Activated CD8-positive, alpha-beta memory T cell treated with anti-CD3 and anti-CD28 coated beads, Interleukin-2, amount 10 ng/mL, durations not matched to agents 7 days and 5 days (primary cell): ENCODE measurements at regions of chr6 and their contacts with region 1.

Region 1: DNA sequence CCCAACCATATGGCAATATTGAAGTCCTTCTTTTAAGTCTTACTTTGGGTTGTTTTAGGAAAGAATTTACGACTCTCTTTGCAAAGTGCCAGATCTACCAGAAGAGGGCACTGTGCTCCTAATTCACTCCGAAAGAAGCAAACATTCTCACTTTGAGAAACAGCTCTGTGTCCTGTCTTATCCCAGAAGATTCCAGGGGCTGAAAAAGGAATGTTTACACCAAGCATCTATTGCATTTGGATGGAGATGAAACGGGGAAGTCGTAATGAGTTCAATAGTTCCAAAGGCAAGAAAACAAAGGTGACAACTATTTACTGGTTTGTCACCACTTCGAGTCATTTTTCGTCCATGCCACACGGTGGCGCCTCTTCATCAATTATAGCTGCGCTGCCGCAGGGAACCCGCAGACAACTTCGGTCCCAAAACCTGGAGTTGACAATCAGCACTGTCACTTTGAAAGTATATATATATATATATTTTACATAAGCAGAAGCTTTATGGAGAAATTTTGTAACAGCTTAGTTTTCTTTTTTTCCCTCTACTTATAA is 121.6 kb downstream of the MOXD1 start:
- DNase-seq: peak; percentile 76
- ATAC-seq: peak; percentile 91
- H3K4me3 Mint-ChIP-seq: peak overlapping the region; percentile 66
- H3K27ac Mint-ChIP-seq: no peak overlapping the region
- H3K4me1 Mint-ChIP-seq: peaks cover 2% of the 10 kb centered on the region
- H3K27me3 Mint-ChIP-seq: peaks cover 21% of the 10 kb centered on the region

Region 2: GRCh38 chr6:132289756-132290155 is 10.1 kb after region 1 on chr6:
- CTCF ChIA-PET with region 1: interaction called, 51 read pairs
- DNase-seq: no peak
- ATAC-seq: no peak
- H3K4me3 Mint-ChIP-seq: no peak overlapping the region
- H3K27ac Mint-ChIP-seq: no peak overlapping the region
- H3K4me1 Mint-ChIP-seq: no peaks in the 10 kb centered on the region
- H3K27me3 Mint-ChIP-seq: peaks cover 37% of the 10 kb centered on the region

Region 3: GRCh38 chr6:132471788-132472187 is 192.1 kb after region 1 on chr6:
- CTCF ChIA-PET with region 1: interaction called, 17 read pairs
- DNase-seq: no peak
- ATAC-seq: no peak
- H3K4me3 Mint-ChIP-seq: no peak overlapping the region
- H3K27ac Mint-ChIP-seq: no peak overlapping the region
- H3K4me1 Mint-ChIP-seq: no peaks in the 10 kb centered on the region
- H3K27me3 Mint-ChIP-seq: no peaks in the 10 kb centered on the region

Region 4: DNA sequence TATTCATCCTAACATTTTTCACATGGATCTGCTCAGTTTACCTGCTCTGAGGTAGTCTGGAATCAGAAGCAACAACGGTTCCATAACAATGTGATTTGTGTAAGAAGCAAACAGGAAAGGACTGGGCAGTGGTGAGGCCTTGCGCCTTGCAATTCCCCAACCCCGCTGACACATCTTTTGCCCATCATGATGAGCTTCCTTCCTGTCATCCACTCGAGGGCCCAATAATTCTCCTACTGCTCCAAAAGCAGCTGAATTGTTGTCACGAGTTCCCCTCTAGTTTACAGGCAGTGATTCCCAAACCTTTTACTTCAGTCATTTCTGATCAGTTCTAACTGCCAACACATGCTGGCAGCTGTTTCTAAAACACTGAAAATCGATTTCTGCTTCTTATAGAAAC is 210.4 kb after region 1 on chr6:
- CTCF ChIA-PET with region 1: interaction called, 133 read pairs
- DNase-seq: no peak
- ATAC-seq: no peak
- H3K4me3 Mint-ChIP-seq: no peak overlapping the region
- H3K27ac Mint-ChIP-seq: peak overlapping the region; percentile 25
- H3K4me1 Mint-ChIP-seq: peaks cover 18% of the 10 kb centered on the region
- H3K27me3 Mint-ChIP-seq: no peaks in the 10 kb centered on the region

Region 5: DNA sequence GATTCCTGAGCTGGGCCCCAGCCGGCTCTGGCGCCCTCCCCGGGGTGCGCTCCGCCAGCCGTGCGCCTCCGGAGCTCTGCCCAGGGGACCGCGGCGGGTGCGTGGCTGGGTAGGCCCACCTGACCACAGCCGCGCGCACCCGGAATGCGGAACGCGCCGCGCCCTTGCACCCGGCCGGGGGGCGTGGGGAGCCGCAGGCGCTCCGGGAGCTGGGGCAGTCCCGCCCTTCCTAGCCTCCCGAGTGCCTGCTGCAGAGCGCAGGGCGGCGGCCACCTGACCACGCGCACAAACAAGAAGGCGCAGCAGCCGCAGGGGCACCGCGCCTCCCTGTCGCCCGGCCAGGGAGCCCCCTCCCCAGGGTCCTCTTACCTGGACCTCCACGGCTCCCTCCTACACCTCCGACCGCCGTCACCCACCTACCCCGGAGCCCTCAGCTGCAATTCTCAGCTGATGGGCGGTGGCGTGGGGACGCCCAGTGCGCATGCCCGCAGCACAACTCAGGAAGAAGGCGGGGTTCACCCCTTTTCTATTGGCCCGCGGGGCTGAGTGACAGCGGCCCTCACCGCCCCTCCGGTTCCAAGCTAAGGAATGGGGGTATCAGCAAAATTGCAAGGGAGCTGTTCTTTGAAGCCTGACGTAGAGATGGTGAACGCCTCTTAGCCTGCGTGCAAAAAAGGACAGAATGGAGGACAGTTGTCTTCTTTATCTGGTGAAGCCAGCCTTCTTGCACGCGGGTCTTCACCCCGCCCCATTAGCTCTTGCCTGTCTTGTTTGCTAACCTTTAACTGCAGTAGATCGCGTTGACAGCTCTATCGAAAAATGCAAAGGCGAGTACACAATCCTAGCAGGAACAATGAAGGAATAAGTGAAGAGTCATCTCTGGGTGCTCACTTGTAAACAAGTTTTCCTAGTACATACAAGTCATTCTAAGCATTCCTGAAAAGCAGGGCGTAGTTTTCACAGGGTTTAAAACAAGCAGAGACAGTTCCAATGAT is 233.3 kb after region 1 on chr6 and contains the start of gene STX7:
- CTCF ChIA-PET with region 1: interaction called, 13 read pairs
- DNase-seq: peak; percentile 91
- ATAC-seq: peak; percentile 97
- H3K4me3 Mint-ChIP-seq: peak within 1 kb of the TSS; percentile 92
- H3K27ac Mint-ChIP-seq: peak within 1 kb of the TSS; percentile 87
- H3K4me1 Mint-ChIP-seq: peaks cover 26% of the 10 kb centered on the region
- H3K27me3 Mint-ChIP-seq: peaks cover 10% of the 10 kb centered on the region
- total RNA-seq, gene STX7: 17.2 to 19.5 TPM